ENCODE measurements at regions of chr15 and their contacts with region 1.

Region 1: GRCh38 chr15:34337557-34338306 is at the start of gene SLC12A6:
- DNase-seq: peak; percentile 93 to 98 (median 97)
- H3K4me3 ChIP-seq: peak within 1 kb of the TSS; percentile 74 to 96 (median 84)
- H3K27ac ChIP-seq: peak within 1 kb of the TSS; percentile 85 to 95
- H3K4me1 ChIP-seq: peaks cover 31 to 63% (median 46%) of the 10 kb centered on the region in 4 experiments
- H3K27me3 ChIP-seq: no peaks in the 10 kb centered on the region

Region 2: DNA sequence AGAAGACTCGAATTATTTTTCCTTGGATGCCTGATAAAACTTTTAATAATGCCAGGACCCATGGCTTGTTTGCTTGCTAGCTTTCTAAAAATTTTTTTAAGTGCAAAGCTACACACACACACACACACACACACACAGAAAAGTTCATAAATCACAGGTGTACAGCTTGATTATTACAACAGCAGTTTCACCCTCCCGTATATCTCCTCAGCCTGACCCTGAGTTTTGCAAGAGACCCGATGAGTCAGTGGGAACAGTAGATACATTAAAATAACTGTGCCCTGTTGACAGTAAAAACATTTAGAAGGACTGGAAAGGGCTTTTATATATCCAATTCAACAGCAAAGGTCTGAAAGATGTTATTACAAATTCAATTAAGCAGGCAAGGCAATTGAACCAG is 66.2 kb before region 1 on chr15:
- CTCF ChIA-PET with region 1: no interaction called
- POLR2A ChIA-PET with region 1: no interaction called
- DNase-seq: peak in 2 of 3 donors; percentile 19 to 23
- H3K4me3 ChIP-seq: no peak overlapping the region
- H3K27ac ChIP-seq: no peak overlapping the region
- H3K4me1 ChIP-seq: no peaks in the 10 kb centered on the region
- H3K27me3 ChIP-seq: no peaks in the 10 kb centered on the region

Region 3: GRCh38 chr15:34318277-34319079 is 19.3 kb before region 1 on chr15:
- CTCF ChIA-PET with region 1: interaction called, 10 read pairs
- POLR2A ChIA-PET with region 1: interaction called, 3 read pairs
- DNase-seq: peak; percentile 52 to 74 (median 60)
- H3K4me3 ChIP-seq: peak overlapping the region in 6 of 7 experiments; percentile 69 to 88 (median 78)
- H3K27ac ChIP-seq: peak overlapping the region; percentile 70 to 88
- H3K4me1 ChIP-seq: peaks cover 7 to 55% (median 23%) of the 10 kb centered on the region in 4 experiments
- H3K27me3 ChIP-seq: no peaks in the 10 kb centered on the region

Measured in common myeloid progenitor, CD34-positive (primary cell).